ENCODE measurements at regions of chr13 and their contacts with region 1.

Region 1: DNA sequence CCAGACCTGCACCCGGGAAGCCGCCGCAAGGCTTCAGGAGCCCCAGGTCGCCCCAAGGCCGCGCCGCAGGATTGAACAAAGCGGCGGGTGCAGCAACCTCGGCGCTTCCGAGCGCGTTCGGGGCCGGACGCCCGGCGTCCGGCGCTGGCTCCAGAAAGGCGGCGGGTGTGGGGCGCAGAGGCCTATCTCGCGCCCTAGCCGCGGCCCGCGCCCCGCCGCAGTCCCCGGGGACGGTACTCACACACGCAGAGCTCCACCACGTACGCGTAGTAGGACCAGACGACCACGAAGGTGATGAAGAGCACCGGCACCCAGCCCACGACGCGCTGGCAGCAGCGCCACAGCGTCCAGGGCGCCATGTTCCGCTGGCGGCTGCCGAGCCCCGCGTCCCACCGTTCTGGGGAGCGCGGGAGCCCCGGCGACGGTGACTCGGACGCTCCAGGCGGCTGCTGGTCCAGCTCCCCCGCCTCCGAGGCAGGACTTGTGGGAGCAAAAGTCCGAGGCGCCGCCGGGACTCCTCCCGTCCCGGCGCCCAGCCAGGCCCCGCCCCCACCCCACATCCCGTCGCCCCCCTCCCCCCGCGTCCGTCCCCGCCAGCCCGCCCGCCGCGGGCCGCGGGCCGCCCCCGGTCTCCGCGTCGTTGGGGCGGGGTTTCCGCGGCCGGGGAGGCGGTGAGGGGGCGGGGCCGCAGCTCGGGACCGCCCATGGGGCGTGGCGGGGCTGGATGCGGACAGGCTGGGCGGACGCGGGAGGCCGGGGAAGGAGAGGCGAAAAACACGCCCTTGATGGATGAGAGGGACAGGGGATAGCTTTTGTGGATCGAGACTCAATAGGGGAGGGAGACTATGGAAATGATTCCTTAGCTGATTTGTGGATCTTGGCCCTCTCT is at the start of gene ZDHHC20:
- DNase-seq: peak; percentile 74 to 92 (median 89)
- ATAC-seq: peak; percentile 80 to 83
- H3K4me3 Mint-ChIP-seq: peak within 1 kb of the TSS; percentile 90 to 96 (median 92)
- H3K27ac Mint-ChIP-seq: peak within 1 kb of the TSS; percentile 86 to 98 (median 93)
- H3K4me1 Mint-ChIP-seq: peaks cover 13 to 44% (median 43%) of the 10 kb centered on the region in 4 donors
- H3K27me3 Mint-ChIP-seq: no peaks in the 10 kb centered on the region
- polyA plus RNA-seq, gene ZDHHC20: 25.8 to 52.5 (median 36.6) TPM

Region 2: GRCh38 chr13:21176220-21176982 is 282.7 kb before region 1 on chr13 and contains the starts of genes MRPL57 and SKA3:
- POLR2A ChIA-PET with region 1: interaction called, 14 read pairs
- DNase-seq: peak; percentile 91 to 96 (median 94)
- ATAC-seq: peak; percentile 97 to 98
- H3K4me3 Mint-ChIP-seq: peak within 1 kb of the TSS; percentile 90 to 100 (median 95)
- H3K27ac Mint-ChIP-seq: peak within 1 kb of the TSS; percentile 93 to 98 (median 96)
- H3K4me1 Mint-ChIP-seq: peaks cover 5 to 35% (median 25%) of the 10 kb centered on the region in 4 donors
- H3K27me3 Mint-ChIP-seq: no peaks in the 10 kb centered on the region
- polyA plus RNA-seq, gene MRPL57: 54.9 to 68.9 (median 55.9) TPM
- polyA plus RNA-seq, gene SKA3: 0.06 to 0.79 TPM in 2 of 3 donors, not detected in the other

Region 3: GRCh38 chr13:21297914-21298831 is 160.9 kb before region 1 on chr13:
- POLR2A ChIA-PET with region 1: interaction called, 12 read pairs
- DNase-seq: peak; percentile 78 to 91 (median 84)
- ATAC-seq: peak; percentile 86 to 95
- H3K4me3 Mint-ChIP-seq: peak overlapping the region; percentile 82 to 95 (median 89)
- H3K27ac Mint-ChIP-seq: peak overlapping the region; percentile 35 to 95 (median 87)
- H3K4me1 Mint-ChIP-seq: peaks cover 13 to 27% (median 22%) of the 10 kb centered on the region in 4 donors
- H3K27me3 Mint-ChIP-seq: no peaks in the 10 kb centered on the region

Region 4: DNA sequence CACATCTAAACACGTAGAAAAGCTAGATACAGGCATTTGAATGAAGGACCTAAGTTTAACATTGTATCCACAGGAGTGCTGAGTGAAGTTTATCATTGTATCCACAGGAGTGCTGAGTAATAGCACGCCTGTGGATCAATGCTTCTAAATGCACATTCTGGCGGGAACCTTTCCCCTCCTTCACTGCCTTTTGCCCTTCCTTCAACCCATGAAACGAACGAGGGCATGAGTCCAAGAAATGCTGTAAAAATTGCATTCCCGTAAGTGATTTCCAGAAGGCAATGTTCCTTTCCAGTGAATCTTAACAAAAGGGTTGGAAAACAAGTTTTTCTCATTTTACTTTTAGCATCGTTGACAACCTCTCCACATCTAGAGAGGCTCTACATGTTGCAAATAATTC is 88.0 kb before region 1 on chr13:
- POLR2A ChIA-PET with region 1: no interaction called
- DNase-seq: no peak
- ATAC-seq: no peak
- H3K4me3 Mint-ChIP-seq: no peak overlapping the region
- H3K27ac Mint-ChIP-seq: no peak overlapping the region
- H3K4me1 Mint-ChIP-seq: peaks cover 0 to 13% (median 8%) of the 10 kb centered on the region in 4 donors
- H3K27me3 Mint-ChIP-seq: no peaks in the 10 kb centered on the region

Region 5: DNA sequence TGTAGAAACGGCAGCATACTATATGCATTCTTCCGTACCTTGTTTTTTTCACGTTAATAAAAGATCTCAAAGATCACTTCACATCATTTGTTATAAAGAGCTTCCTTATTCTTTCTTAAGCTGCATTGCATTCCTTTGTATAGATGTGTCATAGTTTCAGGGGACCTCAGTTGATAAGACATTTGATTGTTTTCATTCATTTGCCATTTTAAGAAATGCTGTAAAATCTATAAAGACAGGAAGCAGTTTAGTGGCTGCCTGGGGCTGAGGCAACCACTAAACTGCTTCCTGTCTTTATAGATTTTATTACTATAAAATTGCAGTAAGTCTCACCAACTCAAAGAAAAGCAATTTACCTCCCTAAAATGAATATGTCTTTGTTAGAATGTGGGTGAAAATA is 59.3 kb before region 1 on chr13:
- POLR2A ChIA-PET with region 1: interaction called, 11 read pairs
- DNase-seq: peak in 4 of 10 donors; percentile 9 to 47 (median 38)
- ATAC-seq: peak; percentile 83
- H3K4me3 Mint-ChIP-seq: peak overlapping the region; percentile 36 to 74 (median 64)
- H3K27ac Mint-ChIP-seq: peak overlapping the region in 9 of 10 donors; percentile 13 to 92 (median 80)
- H3K4me1 Mint-ChIP-seq: peaks cover 14 to 60% (median 53%) of the 10 kb centered on the region in 4 donors
- H3K27me3 Mint-ChIP-seq: no peaks in the 10 kb centered on the region

Region 6: DNA sequence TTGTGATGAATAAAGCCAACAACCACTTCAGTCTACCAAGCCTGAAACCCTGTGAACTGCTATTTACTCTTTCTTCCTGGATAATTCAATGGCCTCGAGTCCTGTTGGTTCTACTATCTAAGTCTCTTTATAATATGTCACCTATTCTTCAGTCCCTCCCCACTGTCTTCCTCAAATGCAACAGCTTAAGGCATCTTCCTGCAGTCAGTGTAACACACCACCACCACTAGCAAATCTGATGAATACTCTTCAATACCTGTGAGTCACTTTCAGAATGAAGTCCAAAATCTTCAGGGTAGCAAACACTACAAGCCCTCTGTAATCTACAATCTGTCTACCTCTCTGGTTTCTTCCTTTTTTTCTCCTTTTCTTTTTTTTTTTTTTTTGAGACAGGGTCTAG is 32.8 kb before region 1 on chr13:
- POLR2A ChIA-PET with region 1: no interaction called
- DNase-seq: no peak
- ATAC-seq: peak in 1 of 2 donors; percentile 44
- H3K4me3 Mint-ChIP-seq: peak overlapping the region in 2 of 10 donors; percentile 13 to 31
- H3K27ac Mint-ChIP-seq: peak overlapping the region in 7 of 10 donors; percentile 2 to 77 (median 5)
- H3K4me1 Mint-ChIP-seq: peaks cover 16 to 39% (median 34%) of the 10 kb centered on the region in 4 donors
- H3K27me3 Mint-ChIP-seq: no peaks in the 10 kb centered on the region

Region 7: DNA sequence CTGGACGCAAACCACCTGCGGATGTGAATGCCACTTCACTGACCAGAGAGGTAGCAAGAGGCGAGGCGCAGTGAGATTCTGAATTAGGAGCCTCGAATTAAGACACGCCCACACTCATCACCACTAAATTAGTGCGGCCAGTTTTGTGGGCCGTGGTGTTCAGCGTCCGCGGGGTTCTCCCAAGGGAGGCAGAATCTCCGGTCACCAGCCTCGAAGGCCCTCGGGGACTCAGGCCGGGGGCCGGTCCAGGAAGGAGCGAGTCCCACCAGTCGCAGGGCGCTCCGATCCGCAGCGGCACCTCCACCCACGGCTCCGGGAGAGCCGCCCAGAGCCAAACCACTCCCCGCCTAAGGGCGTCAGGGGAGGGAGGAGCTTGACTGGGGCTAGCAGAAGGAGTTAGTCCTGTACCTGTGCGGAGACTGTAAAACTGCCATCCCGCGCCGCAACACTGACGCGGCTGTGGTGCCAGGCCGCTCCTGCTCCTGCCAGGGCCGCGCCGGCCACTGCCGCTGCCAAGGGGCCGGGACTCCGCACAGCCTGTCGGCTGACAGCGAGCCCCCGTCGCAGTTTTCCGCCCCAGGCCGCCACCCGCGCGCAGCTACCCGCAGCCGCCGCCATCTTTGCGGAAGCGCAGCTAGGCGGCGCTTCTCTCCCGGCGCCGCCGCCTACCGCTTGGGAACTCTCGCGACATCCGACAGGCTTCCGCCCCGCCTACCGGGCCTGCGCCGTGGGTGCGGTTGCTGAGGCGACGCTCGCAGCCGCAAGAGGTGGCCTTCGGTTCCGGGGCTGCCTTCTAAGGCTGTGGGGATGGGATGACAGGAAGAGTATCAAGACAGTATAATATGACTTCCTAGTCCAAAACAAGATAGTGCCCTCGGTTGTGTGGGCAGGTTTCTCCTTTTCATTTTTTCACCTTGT is 144.7 kb after region 1 on chr13 and contains the start of gene MICU2:
- POLR2A ChIA-PET with region 1: interaction called, 13 read pairs
- DNase-seq: peak; percentile 90 to 98 (median 96)
- ATAC-seq: peak; percentile 92 to 93
- H3K4me3 Mint-ChIP-seq: peak within 1 kb of the TSS; percentile 81 to 92 (median 91)
- H3K27ac Mint-ChIP-seq: peak within 1 kb of the TSS; percentile 92 to 98 (median 96)
- H3K4me1 Mint-ChIP-seq: peaks cover 23 to 52% (median 50%) of the 10 kb centered on the region in 4 donors
- H3K27me3 Mint-ChIP-seq: peaks cover 0 to 15% (median 4%) of the 10 kb centered on the region in 5 donors
- polyA plus RNA-seq, gene MICU2: 37.4 to 44.3 (median 38.7) TPM

Region 8: GRCh38 chr13:21670883-21671619 is 212.0 kb after region 1 on chr13 and contains the start of gene FGF9:
- POLR2A ChIA-PET with region 1: no interaction called
- DNase-seq: peak; percentile 71 to 89 (median 82)
- ATAC-seq: peak; percentile 66 to 70
- H3K4me3 Mint-ChIP-seq: peak within 1 kb of the TSS; percentile 89 to 97 (median 94)
- H3K27ac Mint-ChIP-seq: peak within 1 kb of the TSS; percentile 72 to 94 (median 88)
- H3K4me1 Mint-ChIP-seq: peaks cover 20 to 53% (median 47%) of the 10 kb centered on the region in 4 donors
- H3K27me3 Mint-ChIP-seq: peaks cover 0 to 32% (median 2%) of the 10 kb centered on the region in 5 donors
- polyA plus RNA-seq, gene FGF9: 1.3 to 3.5 (median 1.9) TPM

Region 9: GRCh38 chr13:21884965-21885567 is 426.0 kb after region 1 on chr13:
- POLR2A ChIA-PET with region 1: no interaction called
- DNase-seq: no peak
- ATAC-seq: no peak
- H3K4me3 Mint-ChIP-seq: peak overlapping the region in 1 of 10 donors; percentile 46
- H3K27ac Mint-ChIP-seq: peak overlapping the region in 1 of 10 donors; percentile 79
- H3K4me1 Mint-ChIP-seq: peaks cover 0 to 5% (median under 1%) of the 10 kb centered on the region in 4 donors
- H3K27me3 Mint-ChIP-seq: peaks cover 4 to 34% (median 14%) of the 10 kb centered on the region in 5 donors

Measured in naive thymus-derived CD8-positive, alpha-beta T cell (primary cell).